Aorta (tissue), 5 donors: ENCODE measurements at regions of chr1 and their contacts with region 1.

Region 1: DNA sequence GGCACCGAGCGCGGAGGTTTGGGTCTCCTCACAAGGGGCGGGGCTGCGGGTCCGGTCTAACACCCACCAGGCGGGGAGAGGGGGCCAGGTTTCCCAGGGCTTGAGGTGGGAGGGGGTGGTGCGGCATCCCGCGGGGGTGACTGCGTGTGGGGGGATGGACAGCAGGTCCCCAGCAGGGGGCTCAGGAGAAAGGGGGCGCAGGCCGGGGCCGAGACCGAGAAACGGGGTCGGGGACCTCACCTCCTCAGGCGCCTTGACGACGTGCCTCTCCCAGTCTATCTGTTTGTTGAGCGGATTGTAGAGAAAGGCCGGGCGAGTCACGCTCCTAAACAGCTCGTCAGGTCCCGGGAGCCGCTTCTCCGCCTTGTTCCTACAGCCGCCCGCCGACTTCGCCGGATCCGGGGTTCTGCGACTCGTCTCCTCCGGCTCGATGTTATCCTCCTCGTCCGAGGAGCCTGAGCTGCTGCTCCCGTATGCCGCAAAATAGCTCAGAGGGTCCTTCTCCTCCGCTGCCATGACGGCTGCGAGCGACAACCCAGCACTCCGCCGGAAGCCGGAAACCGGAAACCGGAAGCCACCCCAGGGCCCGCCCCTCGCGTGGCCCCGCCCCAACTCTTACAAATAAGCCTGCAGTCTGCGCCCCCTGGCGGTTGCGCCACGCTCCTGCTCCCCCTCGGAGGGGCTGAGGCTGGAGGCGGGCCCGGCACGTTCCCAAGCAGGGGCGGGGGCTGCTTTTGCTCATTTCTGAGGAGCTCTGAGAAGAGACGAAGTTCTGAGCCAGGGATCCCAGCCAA is at the start of gene C1orf52:
- DNase-seq: peak; percentile 97 to 100
- ATAC-seq: peak; percentile 99
- H3K4me3 ChIP-seq: peak within 1 kb of the TSS; percentile 88 to 89
- H3K27ac ChIP-seq: peak within 1 kb of the TSS in 1 of 2 donors; percentile 66
- H3K4me1 ChIP-seq: no peaks in the 10 kb centered on the region
- H3K27me3 ChIP-seq: no peaks in the 10 kb centered on the region
- total RNA-seq, gene C1orf52: 25.8 to 28.3 TPM

Region 2: DNA sequence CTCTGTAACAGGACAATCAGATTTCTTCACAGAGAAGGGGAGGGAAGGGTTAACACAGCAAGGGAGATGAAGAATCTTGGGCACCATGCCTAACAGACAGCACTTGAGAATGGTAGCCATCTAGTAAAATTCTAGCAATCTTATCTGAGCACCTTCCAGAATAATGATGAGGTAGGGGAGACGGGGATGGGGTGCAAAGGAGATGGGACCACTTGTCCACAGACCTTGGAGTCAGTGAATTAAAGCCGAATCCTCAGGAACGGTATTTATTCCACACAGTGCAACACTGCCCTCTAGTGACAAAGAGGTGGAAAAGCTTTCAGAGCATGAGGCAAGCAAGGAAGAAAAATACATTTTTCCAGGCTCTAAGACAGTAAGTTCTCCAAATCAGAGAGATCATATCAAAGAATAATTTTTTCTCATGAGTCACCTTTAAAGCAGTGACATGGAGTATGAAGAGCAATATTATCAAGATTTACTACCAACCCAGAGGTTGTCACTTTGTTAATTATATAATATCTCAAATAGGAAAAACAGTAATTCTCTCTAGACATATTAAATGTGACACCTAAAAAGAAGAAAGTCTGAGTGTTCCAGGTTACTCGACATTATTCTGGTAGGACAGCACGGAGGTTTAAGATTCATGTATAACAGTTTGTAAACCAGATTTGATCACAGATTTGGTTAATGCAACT is 323.1 kb before region 1 on chr1:
- intact Hi-C with region 1: loop called (anchors 5 kb)
- DNase-seq: no peak
- ATAC-seq: peak; percentile 88
- H3K4me3 ChIP-seq: peak overlapping the region in 1 of 2 donors; percentile 12
- H3K27ac ChIP-seq: no peak overlapping the region
- H3K4me1 ChIP-seq: no peaks in the 10 kb centered on the region
- H3K27me3 ChIP-seq: no peaks in the 10 kb centered on the region

Region 3: DNA sequence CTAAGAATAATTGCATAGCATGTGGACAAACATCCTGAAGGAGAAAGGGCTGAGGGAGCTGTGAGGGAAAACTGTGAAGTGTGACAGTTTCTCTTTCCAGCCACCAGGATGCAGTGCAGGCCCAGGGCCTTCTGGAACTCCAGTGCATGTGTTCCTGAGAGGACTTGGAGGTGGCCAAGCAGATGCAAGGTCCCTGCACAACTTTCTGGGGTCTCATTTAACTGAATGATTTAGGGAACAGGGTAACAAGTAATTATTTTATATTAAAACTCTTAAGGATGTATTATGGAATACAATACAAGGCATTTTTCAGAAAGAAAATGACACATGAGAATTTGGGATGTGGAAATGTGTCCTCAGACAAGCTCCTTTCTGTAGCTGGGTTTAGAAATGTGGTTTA is 149.8 kb before region 1 on chr1:
- intact Hi-C with region 1: loop called (anchors 1 to 2 kb)
- DNase-seq: peak in 1 of 2 donors; percentile 69
- ATAC-seq: peak; percentile 79
- H3K4me3 ChIP-seq: no peak overlapping the region
- H3K27ac ChIP-seq: no peak overlapping the region
- H3K4me1 ChIP-seq: no peaks in the 10 kb centered on the region
- H3K27me3 ChIP-seq: no peaks in the 10 kb centered on the region

Region 4: DNA sequence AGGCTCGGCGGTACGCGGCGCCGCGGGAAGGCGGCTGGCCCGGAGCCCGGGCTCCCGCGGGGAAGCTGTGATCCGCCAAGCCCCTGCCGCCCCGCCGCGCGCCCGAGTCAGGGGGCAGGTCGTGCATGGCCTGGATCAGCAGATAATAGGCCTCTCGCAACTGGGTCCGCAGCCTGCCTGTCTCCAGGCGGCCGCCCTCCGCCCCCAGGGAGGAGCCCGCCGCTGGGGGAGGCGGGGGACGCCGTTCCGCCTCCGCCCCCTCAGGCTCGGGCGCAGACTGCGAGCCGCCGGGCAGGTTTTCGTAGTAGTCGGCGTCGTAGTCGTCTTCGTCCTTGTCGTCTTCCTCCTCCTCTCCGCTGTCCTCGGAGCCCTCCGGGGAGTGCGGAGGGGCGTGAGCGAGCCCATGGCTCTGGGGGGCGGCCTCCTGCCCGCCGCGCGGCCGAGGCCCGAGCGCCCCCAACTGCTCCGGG is 58.4 kb before region 1 on chr1 and contains the start of gene SYDE2:
- intact Hi-C with region 1: loop called (anchors 5 kb)
- DNase-seq: peak; percentile 81 to 91
- ATAC-seq: peak; percentile 89
- H3K4me3 ChIP-seq: peak within 1 kb of the TSS; percentile 91 to 95
- H3K27ac ChIP-seq: peak within 1 kb of the TSS; percentile 62 to 90
- H3K4me1 ChIP-seq: no peaks in the 10 kb centered on the region
- H3K27me3 ChIP-seq: no peaks in the 10 kb centered on the region
- total RNA-seq, gene SYDE2: 10.1 to 16.7 TPM

Region 5: GRCh38 chr1:85307987-85308832 is 48.9 kb after region 1 on chr1:
- intact Hi-C with region 1: no loop called
- DNase-seq: peak; percentile 90 to 97
- ATAC-seq: peak; percentile 96
- H3K4me3 ChIP-seq: no peak overlapping the region
- H3K27ac ChIP-seq: no peak overlapping the region
- H3K4me1 ChIP-seq: peaks cover 0 to 1% of the 10 kb centered on the region in 2 donors
- H3K27me3 ChIP-seq: no peaks in the 10 kb centered on the region

Region 6: GRCh38 chr1:85360730-85361493 is 101.6 kb after region 1 on chr1:
- intact Hi-C with region 1: no loop called
- DNase-seq: peak in 1 of 2 donors; percentile 50
- ATAC-seq: peak; percentile 62
- H3K4me3 ChIP-seq: no peak overlapping the region
- H3K27ac ChIP-seq: peak overlapping the region; percentile 59 to 67
- H3K4me1 ChIP-seq: peaks cover 0 to 15% of the 10 kb centered on the region in 2 donors
- H3K27me3 ChIP-seq: no peaks in the 10 kb centered on the region

Region 7: GRCh38 chr1:85464497-85465098 is 205.3 kb after region 1 on chr1:
- intact Hi-C with region 1: no loop called
- DNase-seq: peak; percentile 80 to 91
- ATAC-seq: peak; percentile 82
- H3K4me3 ChIP-seq: peak overlapping the region; percentile 35 to 86
- H3K27ac ChIP-seq: peak overlapping the region; percentile 33 to 52
- H3K4me1 ChIP-seq: peaks cover 4 to 5% of the 10 kb centered on the region in 2 donors
- H3K27me3 ChIP-seq: no peaks in the 10 kb centered on the region